ENCODE measurements at regions of chr21 and their contacts with region 1.

Region 1: DNA sequence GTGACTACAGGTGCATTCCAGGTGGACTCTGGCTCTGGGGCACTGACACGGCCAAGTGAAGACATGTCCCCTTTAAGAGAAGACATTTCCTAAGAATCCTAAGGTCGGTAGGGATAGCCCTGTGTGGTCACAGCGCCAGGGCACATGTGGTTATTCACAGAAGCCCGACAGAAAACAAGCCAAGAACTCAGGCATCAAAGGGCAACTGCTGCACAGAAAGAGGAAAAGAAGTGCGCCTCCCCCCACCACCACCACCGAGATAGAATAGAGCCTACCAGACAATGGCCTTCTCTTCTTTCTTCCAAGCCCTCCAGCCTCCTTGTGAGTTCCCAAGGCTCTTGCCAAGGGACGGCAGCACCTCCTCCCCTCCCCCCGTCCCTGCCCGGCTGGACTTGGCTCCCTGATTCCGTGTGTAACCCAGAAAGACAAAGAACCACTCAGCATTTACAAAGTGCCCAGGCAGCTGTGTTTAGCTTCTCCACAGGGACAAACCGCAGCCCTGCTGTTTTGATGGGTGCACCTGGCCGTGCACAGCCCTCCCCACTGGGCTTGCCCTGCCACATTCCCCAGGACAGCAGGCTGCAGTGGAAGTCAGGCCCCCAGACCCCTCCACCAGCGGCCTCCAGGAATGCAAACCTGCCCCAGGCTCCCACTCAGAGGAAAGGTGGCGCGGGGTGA is 30.2 kb downstream of the TMPRSS2 start:
- DNase-seq: no peak
- ATAC-seq: no peak
- H3K4me3 ChIP-seq: no peak overlapping the region
- H3K27ac ChIP-seq: no peak overlapping the region
- H3K4me1 ChIP-seq: no peaks in the 10 kb centered on the region
- H3K27me3 ChIP-seq: peaks cover 0 to 7% (median under 1%) of the 10 kb centered on the region in 3 donors
- CTCF ChIP-seq: no peak
- POLR2A ChIP-seq: no peak

Region 2: DNA sequence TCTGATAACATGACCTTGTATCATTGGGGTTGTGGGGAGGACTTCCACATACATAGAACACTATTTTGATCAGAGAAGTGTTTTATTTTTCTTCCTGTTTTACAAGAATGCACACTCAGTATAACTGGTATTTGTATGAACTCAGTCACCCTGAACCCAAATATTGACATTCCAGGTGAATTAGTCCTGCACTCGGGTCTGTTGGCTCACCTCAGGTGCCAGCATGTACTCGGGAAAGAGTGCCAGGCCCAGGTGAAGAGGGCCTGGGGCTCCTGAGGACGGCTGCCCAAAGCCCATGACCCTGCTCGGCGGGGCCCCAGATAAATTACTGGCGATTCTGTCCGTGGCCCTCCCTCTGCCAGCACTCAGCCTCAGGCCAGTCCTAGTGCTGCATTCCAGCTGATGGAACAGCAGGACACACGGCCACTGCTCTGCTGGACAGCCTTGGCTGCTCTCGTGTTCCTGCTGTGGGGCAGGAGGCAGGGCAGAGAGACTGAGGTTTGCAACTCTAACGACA is 105.6 kb after region 1 on chr21:
- in situ Hi-C with region 1: loop called in 1 of 4 experiments (anchors 25 kb)
- intact Hi-C with region 1: no loop called
- DNase-seq: no peak
- ATAC-seq: no peak
- H3K4me3 ChIP-seq: no peak overlapping the region
- H3K27ac ChIP-seq: no peak overlapping the region
- H3K4me1 ChIP-seq: no peaks in the 10 kb centered on the region
- H3K27me3 ChIP-seq: no peaks in the 10 kb centered on the region
- CTCF ChIP-seq: no peak
- POLR2A ChIP-seq: no peak

Measured in gastrocnemius medialis (tissue), 4 donors.